Endothelial cell of umbilical vein (primary cell): ENCODE measurements at regions of chr7 and their contacts with region 1.

Region 1: DNA sequence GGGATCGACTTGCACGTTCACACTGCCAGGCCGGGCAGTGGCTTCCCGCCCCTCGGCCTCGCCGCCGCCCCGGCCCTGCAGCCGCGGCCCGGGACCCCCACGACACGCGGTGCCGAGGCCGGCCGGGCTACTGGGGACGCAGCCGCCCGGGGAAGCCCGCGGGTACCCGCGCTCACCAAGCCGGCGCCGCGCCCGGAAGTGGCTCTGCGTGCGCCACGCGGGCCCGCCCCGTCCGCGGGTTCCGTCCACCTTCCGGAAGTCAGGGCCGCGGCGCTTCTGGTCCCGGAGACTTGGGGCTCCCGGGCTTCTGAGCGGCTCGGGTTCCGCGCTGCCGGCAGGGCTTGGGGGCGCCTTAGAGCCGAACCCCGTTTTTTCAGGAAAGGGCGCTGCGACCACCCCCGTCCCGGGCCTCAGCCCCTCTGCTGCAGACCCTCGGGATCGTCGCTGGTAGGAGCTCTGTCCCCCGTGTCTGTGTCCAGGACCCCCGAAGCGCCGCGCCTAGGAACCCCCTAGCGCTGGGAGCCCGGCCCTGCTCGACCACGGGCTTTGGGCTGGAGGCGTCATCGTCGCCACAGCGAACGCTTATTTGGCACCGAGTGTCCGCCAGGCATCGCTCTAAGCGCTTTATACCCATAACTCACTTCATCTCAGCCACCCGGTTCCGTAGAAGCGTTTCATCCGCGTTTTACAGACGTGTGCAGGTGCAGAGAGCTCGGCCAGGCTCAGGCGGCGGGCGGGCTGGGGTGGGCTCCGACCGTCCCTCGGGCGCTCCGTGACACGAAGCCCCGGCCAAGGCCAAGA is at the start of gene PSMG3:
- DNase-seq: peak; percentile 78
- H3K4me3 ChIP-seq: peak within 1 kb of the TSS; percentile 90 to 93 (median 93)
- H3K27ac ChIP-seq: peak within 1 kb of the TSS; percentile 93
- H3K4me1 ChIP-seq: peaks cover 3% of the 10 kb centered on the region
- H3K27me3 ChIP-seq: no peaks in the 10 kb centered on the region
- CTCF ChIP-seq: peak in 1 of 2 donors; percentile 33
- POLR2A ChIP-seq: peak; percentile 93
- total RNA-seq, gene PSMG3: 25.5 and 28.4 TPM in 2 replicates

Region 2: DNA sequence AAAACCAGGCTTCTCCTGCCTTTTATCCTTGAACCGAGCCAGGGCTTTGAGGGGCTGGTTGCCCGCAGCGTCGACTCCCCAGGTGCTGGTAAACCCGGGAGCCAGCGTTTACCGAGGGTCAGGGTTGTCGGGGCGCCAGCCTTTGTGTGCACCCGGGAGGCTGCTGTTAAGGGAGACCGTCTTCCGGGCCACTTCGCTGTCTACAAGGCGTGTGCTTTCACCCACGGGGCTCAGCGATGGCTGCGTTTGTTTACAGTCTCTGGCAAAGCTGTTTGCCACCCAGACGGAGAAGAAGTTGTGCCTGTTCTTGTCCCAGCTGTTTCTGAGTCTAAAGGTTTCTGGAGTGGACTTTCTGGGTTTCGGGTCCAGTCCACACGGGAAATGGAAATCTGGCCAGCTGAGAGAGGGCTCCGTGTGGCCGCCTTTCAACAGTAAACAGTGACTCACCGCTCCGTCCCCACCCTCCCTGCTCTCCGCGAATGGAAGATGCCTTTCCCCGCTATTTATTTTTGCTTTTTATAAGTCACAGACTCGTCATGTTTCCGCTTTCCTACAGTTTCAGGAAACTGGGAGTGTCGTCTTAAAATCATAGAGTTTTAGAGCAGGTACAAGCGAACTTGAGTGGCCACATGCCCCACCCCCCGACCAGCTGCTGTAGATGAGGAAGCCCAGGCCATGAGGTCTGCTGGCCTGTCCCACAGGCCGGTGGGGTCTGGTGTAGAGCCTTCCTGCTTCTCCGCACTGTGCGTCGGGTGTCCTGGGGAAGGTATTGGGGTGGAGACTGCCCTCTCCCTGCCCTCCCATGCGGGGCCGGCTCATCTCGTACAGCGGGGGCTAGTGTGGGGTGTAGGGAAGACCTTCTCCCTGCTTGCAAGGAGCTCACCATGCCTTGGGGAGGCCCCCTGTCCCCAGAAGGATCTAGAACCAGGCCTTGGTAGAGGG is 37.3 kb before region 1 on chr7:
- CTCF ChIA-PET with region 1: no interaction called
- POLR2A ChIA-PET with region 1: no interaction called
- dilution Hi-C with region 1: no loop called
- intact Hi-C with region 1: loop called (anchors 2 kb)
- DNase-seq: peak; percentile 97
- H3K4me3 ChIP-seq: peak overlapping the region; percentile 5 to 70 (median 54)
- H3K27ac ChIP-seq: peak overlapping the region; percentile 97
- H3K4me1 ChIP-seq: peaks cover 49% of the 10 kb centered on the region
- H3K27me3 ChIP-seq: peaks cover 0 to under 1% of the 10 kb centered on the region in 2 experiments
- CTCF ChIP-seq: no peak
- POLR2A ChIP-seq: peak; percentile 50

Region 3: GRCh38 chr7:1664711-1665548 is 94.9 kb after region 1 on chr7:
- CTCF ChIA-PET with region 1: no interaction called
- POLR2A ChIA-PET with region 1: no interaction called
- dilution Hi-C with region 1: no loop called
- intact Hi-C with region 1: loop called (anchors 2 kb)
- DNase-seq: peak; percentile 66
- H3K4me3 ChIP-seq: peak overlapping the region; percentile 33 to 67 (median 43)
- H3K27ac ChIP-seq: no peak overlapping the region
- H3K4me1 ChIP-seq: peaks cover 3% of the 10 kb centered on the region
- H3K27me3 ChIP-seq: peaks cover 32 to 35% of the 10 kb centered on the region in 2 experiments
- CTCF ChIP-seq: peak; percentile 59 to 87
- POLR2A ChIP-seq: no peak